MCF 10A (cell line): ENCODE measurements at regions of chr6 and their contacts with region 1.

Region 1: GRCh38 chr6:112372226-112372806 is 25.2 kb downstream of the RFPL4B start:
- DNase-seq: peak; percentile 47
- H3K4me3 Mint-ChIP-seq: no peak overlapping the region
- H3K27ac Mint-ChIP-seq: no peak overlapping the region
- H3K4me1 Mint-ChIP-seq: peaks cover 5% of the 10 kb centered on the region
- H3K27me3 Mint-ChIP-seq: no peaks in the 10 kb centered on the region
- CTCF ChIP-seq: peak; percentile 36

Region 2: DNA sequence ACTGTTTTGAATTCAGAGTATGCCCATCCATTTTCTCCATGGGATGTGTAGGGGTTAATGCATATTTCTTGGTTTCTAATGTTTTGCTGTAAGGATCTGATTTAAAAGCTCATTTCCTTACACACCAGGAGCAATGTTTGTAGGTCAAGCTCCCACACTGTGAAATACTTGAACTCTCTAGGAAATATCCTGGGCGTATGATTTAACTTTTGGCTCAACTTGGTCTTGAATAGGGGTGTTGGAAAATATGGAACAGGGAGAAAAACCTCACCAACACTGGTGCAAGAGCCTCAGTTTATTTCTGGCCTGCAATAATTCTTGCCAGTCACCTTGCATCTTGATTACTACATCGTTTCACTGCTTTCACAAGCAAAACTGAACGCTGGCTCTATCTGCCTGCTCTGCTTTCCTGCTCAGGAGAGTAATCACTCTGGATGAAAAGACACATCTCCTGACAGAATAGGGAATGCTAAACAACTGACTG is 50.3 kb before region 1 on chr6:
- CTCF ChIA-PET with region 1: interaction called, 13 read pairs
- POLR2A ChIA-PET with region 1: no interaction called
- intact Hi-C with region 1: loop called (anchors 10 kb)
- DNase-seq: no peak
- H3K4me3 Mint-ChIP-seq: no peak overlapping the region
- H3K27ac Mint-ChIP-seq: no peak overlapping the region
- H3K4me1 Mint-ChIP-seq: no peaks in the 10 kb centered on the region
- H3K27me3 Mint-ChIP-seq: no peaks in the 10 kb centered on the region
- CTCF ChIP-seq: no peak

Region 3: DNA sequence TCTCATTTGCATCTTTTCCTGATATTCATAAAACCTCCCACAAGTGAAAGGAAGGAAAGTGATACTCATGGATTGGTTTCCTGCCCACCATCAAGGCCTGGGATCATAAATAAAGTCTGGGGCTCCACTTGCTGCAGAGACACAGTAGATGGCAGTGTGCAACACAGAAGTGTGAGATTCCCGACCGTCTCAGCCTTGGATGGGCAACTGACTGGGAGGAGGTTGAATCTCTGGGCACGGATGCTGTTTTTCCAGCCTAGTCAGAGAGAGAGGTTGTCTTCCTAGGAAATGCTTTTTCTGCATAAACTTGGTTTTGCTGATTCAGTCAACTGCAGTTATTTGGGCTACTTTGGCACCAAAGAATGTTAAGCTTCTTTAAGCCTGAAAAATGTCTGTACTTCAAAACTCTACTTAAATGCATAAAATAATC is 35.1 kb before region 1 on chr6:
- CTCF ChIA-PET with region 1: interaction called, 29 read pairs
- POLR2A ChIA-PET with region 1: no interaction called
- intact Hi-C with region 1: loop called (anchors 1 kb)
- DNase-seq: peak; percentile 77
- H3K4me3 Mint-ChIP-seq: no peak overlapping the region
- H3K27ac Mint-ChIP-seq: no peak overlapping the region
- H3K4me1 Mint-ChIP-seq: peaks cover 3% of the 10 kb centered on the region
- H3K27me3 Mint-ChIP-seq: no peaks in the 10 kb centered on the region
- CTCF ChIP-seq: peak; percentile 70

Region 4: DNA sequence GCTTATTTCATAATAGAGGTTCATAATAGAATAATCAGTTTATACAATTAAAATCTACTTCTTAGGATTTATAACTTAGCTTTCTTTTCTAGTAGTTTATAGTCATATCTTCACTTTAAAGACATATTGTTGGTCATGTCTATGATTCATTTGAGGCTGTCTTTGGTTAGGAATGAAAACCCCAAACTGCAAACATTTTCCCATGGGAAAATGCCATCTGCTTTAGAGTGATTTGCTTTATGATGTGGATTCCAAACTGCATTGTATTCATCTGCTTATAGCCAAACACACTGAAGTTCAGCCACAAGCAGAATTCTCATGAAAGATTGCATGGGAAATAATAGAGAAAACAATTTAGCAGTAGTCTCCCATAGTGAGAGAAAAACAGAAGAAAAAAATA is 102.8 kb after region 1 on chr6:
- CTCF ChIA-PET with region 1: no interaction called
- POLR2A ChIA-PET with region 1: no interaction called
- intact Hi-C with region 1: no loop called
- DNase-seq: no peak
- H3K4me3 Mint-ChIP-seq: no peak overlapping the region
- H3K27ac Mint-ChIP-seq: no peak overlapping the region
- H3K4me1 Mint-ChIP-seq: peaks cover 11% of the 10 kb centered on the region
- H3K27me3 Mint-ChIP-seq: no peaks in the 10 kb centered on the region
- CTCF ChIP-seq: no peak